Posterior cingulate gyrus (tissue), 11 donors: ENCODE measurements at regions of chr10 and their contacts with region 1.

Region 1: DNA sequence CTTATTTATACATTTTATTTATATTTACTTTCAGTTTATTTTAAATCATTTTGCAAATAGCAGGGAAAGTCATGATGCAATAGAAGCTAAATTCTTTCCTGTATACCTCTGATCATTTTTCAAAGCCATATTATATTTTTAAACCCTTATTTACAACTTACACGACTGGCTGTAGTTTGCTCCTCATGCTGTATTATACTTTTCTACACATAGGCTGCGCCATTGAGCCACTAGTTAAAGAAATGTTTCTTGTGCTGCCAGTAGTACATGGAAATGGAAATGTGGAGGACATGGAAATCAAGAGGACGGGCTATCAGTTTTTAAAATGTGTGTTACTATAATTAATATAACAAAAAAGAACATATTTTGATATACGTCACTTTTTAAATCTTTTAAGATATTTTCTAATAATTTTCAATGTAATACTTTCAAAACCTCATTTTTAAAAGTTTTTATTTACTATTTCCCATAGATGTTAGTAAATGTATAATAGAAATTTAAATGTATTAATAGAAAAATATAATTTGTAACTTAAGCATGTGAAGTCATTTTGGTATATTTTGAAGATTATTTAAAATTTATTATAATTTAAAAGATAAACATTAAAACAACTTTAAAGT is 118.5 kb downstream of the VTI1A start:
- DNase-seq: peak in 1 of 10 donors; percentile 33

Region 2: GRCh38 chr10:111137012-111137411 is 1428.5 kb before region 1 on chr10:
- intact Hi-C with region 1: no loop called
- DNase-seq: no peak

Region 3: GRCh38 chr10:112375721-112376395 is 189.7 kb before region 1 on chr10:
- intact Hi-C with region 1: no loop called
- DNase-seq: no peak

Region 4: GRCh38 chr10:113126229-113127201 is 561.0 kb after region 1 on chr10:
- intact Hi-C with region 1: loop called (anchors 5 kb)
- DNase-seq: peak; percentile 41 to 96 (median 74)